Dorsolateral prefrontal cortex (tissue), 120 donors: ENCODE measurements at regions of chr20 and their contacts with region 1.

Region 1: DNA sequence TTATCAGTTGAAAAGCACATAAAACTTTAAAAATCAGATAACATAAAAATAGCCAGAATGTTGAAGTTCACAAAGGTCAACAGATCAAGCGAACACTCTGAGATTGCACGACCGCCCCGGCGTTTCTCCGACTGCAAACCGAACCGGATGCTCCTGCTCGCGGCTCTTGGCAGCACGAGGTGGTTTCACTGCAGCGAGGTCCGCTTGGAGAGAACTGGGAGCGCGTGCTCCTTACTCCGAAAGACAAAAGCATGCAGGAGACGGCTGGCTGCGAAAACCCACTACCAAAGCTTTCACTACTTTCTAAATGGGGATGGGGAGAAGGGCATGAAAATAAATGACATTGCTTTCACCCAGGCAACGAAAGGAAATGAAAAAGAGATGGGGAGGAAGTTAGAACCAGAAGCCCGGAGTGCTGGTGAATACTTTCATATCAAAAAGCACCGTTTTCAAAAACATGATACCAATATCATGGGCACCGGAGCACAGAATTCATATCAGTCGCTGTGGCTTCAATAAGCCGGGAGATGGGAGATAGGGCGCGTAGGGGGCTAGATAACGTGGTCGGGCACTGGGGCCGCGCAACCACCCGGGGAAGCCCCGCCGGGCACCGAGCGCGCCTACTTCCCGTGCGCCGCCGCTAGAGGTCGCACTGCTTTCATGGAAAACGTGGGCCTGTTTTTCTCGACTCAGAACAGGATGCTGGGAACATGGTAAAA is 8.3 kb upstream of the ANKRD60 start:
- DNase-seq: peak in 9 of 10 donors; percentile 61 to 87 (median 75)
- H3K4me3 ChIP-seq: peak overlapping the region; percentile 29 to 69 (median 52)
- H3K27ac ChIP-seq: peak overlapping the region in 3 of 59 donors; percentile 5 to 46 (median 8)
- H3K27me3 ChIP-seq: no peaks in the 10 kb centered on the region
- CTCF ChIP-seq: peak; percentile 88 to 99 (median 96)

Region 2: DNA sequence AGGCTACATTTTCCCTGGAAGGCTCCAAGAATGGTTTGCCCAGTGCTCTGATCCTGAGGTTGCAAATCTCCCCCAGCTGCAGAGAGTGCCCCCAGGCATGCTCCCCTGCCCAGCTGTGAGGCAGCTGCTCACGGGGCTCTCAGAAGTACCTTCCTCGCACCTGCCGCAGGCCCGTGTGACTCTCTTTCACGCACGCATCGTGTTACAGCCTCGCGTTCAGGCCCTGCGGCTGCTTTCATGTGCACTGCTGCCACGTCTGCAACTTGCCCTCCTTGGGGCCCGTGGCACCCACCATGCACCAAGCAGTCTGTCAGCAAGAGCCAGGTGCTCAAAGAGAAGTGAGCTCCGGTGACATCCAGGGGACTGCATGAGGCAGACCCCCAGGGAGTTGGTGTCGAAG is 935.7 kb before region 1 on chr20:
- intact Hi-C with region 1: no loop called
- DNase-seq: no peak
- H3K4me3 ChIP-seq: no peak overlapping the region
- H3K27ac ChIP-seq: no peak overlapping the region
- H3K27me3 ChIP-seq: no peaks in the 10 kb centered on the region
- CTCF ChIP-seq: no peak

Region 3: GRCh38 chr20:58141971-58142781 is 94.6 kb before region 1 on chr20:
- intact Hi-C with region 1: no loop called
- DNase-seq: no peak
- H3K4me3 ChIP-seq: no peak overlapping the region
- H3K27ac ChIP-seq: peak overlapping the region in 42 of 59 donors; percentile 7 to 89 (median 75)
- H3K27me3 ChIP-seq: peaks cover 0 to 33% (median 4%) of the 10 kb centered on the region in 45 donors
- CTCF ChIP-seq: no peak

Region 4: DNA sequence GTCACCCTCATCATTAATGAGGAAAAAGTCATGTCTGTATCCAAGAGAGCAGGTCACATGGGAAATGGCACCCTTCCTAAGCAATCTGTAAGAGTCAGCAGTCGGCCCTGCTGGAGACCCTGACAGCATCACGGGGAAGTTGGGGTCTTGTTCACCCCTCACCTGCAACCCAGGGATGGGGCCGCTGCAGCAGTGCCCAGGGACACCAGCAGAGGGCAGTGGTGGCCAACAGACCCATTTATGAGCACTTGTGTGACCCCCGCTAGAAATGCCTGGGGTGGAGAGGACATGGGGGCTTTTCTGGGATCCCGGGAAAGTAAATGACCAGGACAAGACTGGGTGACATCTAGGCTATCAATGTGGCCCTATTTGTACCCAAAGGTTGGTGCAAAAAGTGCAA is 44.2 kb before region 1 on chr20:
- intact Hi-C with region 1: no loop called
- DNase-seq: no peak
- H3K4me3 ChIP-seq: no peak overlapping the region
- H3K27ac ChIP-seq: no peak overlapping the region
- H3K27me3 ChIP-seq: peaks cover 0 to 8% (median 0%) of the 10 kb centered on the region in 45 donors
- CTCF ChIP-seq: peak in 50 of 56 donors; percentile 10 to 58 (median 42)

Region 5: DNA sequence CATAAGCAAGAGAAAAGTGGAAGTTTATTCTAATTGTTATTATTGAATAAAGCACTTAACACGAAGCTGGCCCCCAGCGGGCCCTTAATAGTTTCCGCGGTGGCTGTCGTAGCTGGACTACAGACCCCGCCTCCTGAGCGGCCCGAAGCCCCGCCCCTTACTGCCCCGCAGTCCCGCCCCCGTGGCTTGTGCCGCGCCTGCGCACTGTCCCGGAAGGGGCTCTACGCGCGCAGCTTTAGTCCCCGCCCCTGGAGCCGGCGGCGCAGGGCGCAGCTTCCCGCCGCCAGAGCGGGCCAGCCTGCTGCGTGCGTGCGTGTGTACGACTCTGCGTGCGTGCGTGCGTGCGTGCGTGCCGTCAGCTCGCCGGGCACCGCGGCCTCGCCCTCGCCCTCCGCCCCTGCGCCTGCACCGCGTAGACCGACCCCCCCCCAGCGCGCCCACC is 152.1 kb after region 1 on chr20 and contains the start of gene VAPB:
- intact Hi-C with region 1: loop called in 1 of 2 experiments (anchors 5 kb)
- DNase-seq: peak; percentile 90 to 98 (median 93)
- H3K4me3 ChIP-seq: peak within 1 kb of the TSS; percentile 57 to 99 (median 86)
- H3K27ac ChIP-seq: peak within 1 kb of the TSS in 57 of 59 donors; percentile 32 to 95 (median 85)
- H3K27me3 ChIP-seq: no peaks in the 10 kb centered on the region
- CTCF ChIP-seq: peak in 30 of 56 donors; percentile 5 to 49 (median 26)
- total RNA-seq, gene VAPB: 59.1 to 124 (median 96.7) TPM

Region 6: DNA sequence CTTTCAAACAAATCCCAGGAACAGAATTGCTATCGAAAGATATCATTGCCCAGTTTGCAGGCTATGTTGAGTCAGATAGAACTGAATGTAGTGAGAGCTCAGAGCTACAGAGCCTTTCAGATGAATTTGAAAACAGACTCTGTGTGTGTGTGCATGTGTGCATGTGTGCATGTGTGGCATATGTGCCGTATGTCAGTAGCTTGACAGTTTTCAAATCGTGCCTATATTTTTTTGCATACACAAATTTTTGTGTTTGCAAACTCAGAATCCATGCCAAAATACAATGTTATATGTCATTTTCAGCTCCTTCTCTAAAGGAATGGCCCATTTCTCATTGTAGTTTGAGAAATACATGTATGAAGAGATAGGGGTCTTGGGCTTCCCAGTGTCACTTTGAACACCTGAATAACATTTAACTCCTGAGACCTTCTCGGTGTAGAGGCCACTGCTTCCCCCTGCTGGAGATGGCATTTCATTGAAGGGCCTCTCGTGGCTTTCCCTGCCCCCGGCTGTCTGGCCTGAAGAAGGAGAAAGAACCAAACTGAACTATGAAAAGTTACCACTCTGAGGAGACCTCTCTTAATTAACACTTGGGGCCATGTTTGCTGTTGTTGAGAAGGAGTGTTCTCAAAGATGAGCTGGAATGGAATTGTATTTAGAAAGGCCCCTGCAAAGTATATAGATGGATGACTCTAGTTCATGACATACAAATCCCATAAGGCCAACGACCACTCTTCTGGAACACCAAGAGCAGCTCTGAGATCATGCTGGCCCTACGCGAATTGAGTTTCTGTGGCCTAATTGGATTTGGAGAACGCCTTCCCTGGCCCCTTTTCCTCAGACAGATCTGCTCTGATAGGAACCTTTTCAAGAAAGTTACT is 211.0 kb after region 1 on chr20:
- intact Hi-C with region 1: loop called (anchors 2 to 10 kb)
- DNase-seq: no peak
- H3K4me3 ChIP-seq: no peak overlapping the region
- H3K27ac ChIP-seq: no peak overlapping the region
- H3K27me3 ChIP-seq: no peaks in the 10 kb centered on the region
- CTCF ChIP-seq: peak in 52 of 56 donors; percentile 17 to 67 (median 51)

Region 7: GRCh38 chr20:58650776-58651558 is 414.2 kb after region 1 on chr20 and contains the start of gene STX16:
- intact Hi-C with region 1: loop called (anchors 5 kb)
- DNase-seq: peak; percentile 63 to 92 (median 86)
- H3K4me3 ChIP-seq: peak within 1 kb of the TSS; percentile 66 to 100 (median 98)
- H3K27ac ChIP-seq: peak within 1 kb of the TSS; percentile 68 to 98 (median 91)
- H3K27me3 ChIP-seq: no peaks in the 10 kb centered on the region
- CTCF ChIP-seq: peak in 55 of 56 donors; percentile 27 to 81 (median 56)
- total RNA-seq, gene STX16: 54.5 to 110 (median 84.5) TPM

Region 8: GRCh38 chr20:58839474-58839874 is 602.7 kb after region 1 on chr20:
- intact Hi-C with region 1: loop called in 1 of 2 experiments (anchors 10 kb)
- DNase-seq: peak in 5 of 10 donors; percentile 15 to 60 (median 27)
- H3K4me3 ChIP-seq: peak overlapping the region in 35 of 59 donors; percentile 4 to 44 (median 24)
- H3K27ac ChIP-seq: no peak overlapping the region
- H3K27me3 ChIP-seq: peaks cover 0 to 68% (median 37%) of the 10 kb centered on the region in 45 donors
- CTCF ChIP-seq: peak in 48 of 56 donors; percentile 12 to 59 (median 40)

Region 9: DNA sequence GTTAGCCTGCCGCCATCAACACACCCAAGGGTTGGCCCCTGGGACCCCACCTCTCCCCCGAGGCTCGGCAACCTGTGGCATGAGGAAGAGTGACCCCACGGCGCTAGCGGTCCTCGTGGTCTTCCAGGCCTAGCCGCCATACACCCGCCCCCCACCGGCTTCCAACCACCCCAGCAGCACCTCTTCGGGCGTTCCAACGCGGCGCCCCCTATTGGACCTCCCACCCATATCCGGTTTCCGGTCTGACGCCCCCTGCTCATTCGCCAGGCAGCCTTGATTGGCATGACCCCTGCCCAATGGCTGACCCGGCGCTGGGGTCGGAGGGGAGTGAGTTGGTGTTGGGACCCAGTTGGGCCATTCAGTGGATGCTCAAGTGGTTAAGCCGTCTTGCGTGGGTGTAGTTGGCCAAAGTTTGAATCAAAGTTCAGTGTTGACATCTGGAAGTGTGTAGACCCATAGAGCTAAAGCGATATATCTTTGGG is 614.0 kb after region 1 on chr20 and contains the start of gene GNAS-AS1:
- intact Hi-C with region 1: loop called (anchors 5 to 10 kb)
- DNase-seq: peak in 8 of 10 donors; percentile 46 to 80 (median 66)
- H3K4me3 ChIP-seq: peak within 1 kb of the TSS; percentile 26 to 73 (median 51)
- H3K27ac ChIP-seq: no peak within 1 kb of the TSS
- H3K27me3 ChIP-seq: peaks cover 0 to 63% (median 31%) of the 10 kb centered on the region in 45 donors
- CTCF ChIP-seq: peak in 31 of 56 donors; percentile 11 to 63 (median 34)
- total RNA-seq, gene GNAS-AS1: 0.19 to 2.7 (median 0.78) TPM in 112 of 120 experiments, not detected in the others